ENCODE measurements at regions of chr4 and their contacts with region 1.

Region 1: GRCh38 chr4:139651282-139652194 is 14.1 kb upstream of the MGST2 start:
- DNase-seq: peak; percentile 78
- H3K4me3 ChIP-seq: no peak overlapping the region
- H3K27ac ChIP-seq: no peak overlapping the region
- H3K4me1 ChIP-seq: peaks cover 0 to 4% (median under 1%) of the 10 kb centered on the region in 4 donors
- H3K27me3 ChIP-seq: no peaks in the 10 kb centered on the region
- CTCF ChIP-seq: peak; percentile 83 to 94 (median 89)
- EP300 ChIP-seq: no peak
- POLR2A ChIP-seq: no peak

Region 2: DNA sequence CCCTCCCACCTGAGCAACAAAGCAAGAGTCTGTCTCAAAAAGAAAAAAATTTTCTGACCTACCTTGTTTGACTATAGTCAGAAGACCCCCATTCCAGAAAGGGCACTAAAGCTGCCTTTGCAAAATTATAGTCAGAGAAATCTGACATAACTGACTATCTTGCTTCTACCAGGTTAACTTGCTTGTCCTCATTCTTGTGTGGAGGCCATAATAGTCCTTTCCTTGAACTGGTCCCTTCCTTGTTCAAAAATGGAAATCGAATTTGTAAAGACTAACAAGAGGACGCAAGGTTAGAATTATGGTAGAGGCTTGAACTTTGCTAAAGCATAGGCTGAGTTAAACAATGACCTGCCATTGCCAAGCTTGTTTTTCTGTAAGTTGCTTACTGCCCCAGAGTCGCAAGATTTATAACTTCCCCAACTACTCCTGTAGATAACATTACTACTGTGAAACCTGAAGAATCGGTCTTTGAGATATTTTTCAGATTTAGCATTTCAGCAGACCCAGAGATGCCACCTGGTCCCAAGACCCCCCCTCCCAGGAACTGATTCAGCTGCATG is 152.4 kb before region 1 on chr4:
- in situ Hi-C with region 1: no loop called
- intact Hi-C with region 1: loop called (anchors 5 kb)
- DNase-seq: no peak
- H3K4me3 ChIP-seq: no peak overlapping the region
- H3K27ac ChIP-seq: no peak overlapping the region
- H3K4me1 ChIP-seq: no peaks in the 10 kb centered on the region
- H3K27me3 ChIP-seq: no peaks in the 10 kb centered on the region
- CTCF ChIP-seq: no peak
- EP300 ChIP-seq: no peak
- POLR2A ChIP-seq: no peak

Region 3: DNA sequence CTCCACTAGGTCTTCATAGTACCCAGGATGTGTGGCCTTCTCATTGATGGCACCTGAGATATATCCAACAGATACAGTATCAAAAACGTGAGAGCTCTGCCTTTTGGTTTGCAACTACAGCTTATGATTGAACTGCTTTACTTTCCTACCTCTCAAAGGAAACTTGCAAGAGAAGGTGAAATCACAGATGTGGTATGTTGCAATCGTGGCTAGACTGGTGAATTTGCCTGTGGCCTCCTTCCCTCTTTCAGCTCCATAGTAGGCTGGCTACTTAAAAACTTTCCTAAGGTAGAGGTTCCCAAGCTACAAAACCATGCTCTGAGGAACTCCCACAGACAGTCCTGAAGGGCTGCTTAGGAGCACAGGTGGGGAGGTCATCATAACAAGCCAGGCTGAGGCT is 1010.5 kb after region 1 on chr4:
- in situ Hi-C with region 1: no loop called
- intact Hi-C with region 1: no loop called
- DNase-seq: no peak
- H3K4me3 ChIP-seq: no peak overlapping the region
- H3K27ac ChIP-seq: no peak overlapping the region
- H3K4me1 ChIP-seq: no peaks in the 10 kb centered on the region
- H3K27me3 ChIP-seq: no peaks in the 10 kb centered on the region
- CTCF ChIP-seq: no peak
- EP300 ChIP-seq: no peak
- POLR2A ChIP-seq: no peak

Measured in transverse colon (tissue), 4 donors.